Esophagus muscularis mucosa (tissue), 4 donors: ENCODE measurements at regions of chr9 and their contacts with region 1.

Region 1: DNA sequence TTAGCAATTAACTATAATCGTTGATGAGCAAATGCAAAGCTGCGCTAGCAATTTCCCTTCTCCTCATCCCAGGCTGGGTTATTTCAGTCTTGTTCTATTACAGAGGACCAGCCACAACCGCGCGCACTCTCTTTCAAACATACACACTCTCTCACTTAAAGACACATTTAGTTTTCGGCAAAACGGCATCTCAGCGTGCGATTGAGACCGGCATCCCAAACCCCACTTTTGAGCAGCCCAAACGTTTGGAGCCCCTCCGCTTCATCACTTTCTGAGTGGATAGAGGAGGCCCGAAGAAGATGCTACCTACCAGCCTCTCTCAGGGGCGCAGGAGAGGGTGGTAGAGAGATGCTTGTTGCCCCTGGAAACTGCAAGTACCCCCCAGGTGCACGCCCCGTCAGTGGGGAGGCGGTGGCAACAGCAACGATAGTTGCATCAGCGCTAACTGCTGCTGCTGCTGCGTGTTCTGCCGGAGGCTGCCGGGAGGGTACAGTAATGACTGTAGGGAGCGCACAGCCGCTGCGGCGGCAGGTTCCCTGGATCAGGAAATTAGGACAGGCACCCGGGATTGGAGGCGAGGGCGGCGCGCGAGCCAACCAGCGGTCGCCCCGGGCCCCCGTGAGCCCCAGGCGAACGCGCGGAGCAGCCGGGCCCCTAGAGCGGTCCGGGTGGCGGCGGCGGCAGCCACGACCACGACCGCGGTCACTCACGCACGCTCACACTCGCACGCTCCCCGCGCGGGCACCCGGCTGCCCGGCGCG is 488 bp upstream of the VLDLR start:
- DNase-seq: peak; percentile 93
- H3K4me3 ChIP-seq: peak overlapping the region; percentile 79 to 93 (median 86)
- H3K27ac ChIP-seq: peak overlapping the region; percentile 86 to 92 (median 89)
- H3K4me1 ChIP-seq: peaks cover 12 to 49% (median 34%) of the 10 kb centered on the region in 4 donors
- H3K27me3 ChIP-seq: peaks cover 0 to 20% (median 2%) of the 10 kb centered on the region in 4 donors
- CTCF ChIP-seq: peak in 2 of 3 experiments; percentile 25 to 36
- EP300 ChIP-seq: no peak
- POLR2A ChIP-seq: peak; percentile 21

Region 2: DNA sequence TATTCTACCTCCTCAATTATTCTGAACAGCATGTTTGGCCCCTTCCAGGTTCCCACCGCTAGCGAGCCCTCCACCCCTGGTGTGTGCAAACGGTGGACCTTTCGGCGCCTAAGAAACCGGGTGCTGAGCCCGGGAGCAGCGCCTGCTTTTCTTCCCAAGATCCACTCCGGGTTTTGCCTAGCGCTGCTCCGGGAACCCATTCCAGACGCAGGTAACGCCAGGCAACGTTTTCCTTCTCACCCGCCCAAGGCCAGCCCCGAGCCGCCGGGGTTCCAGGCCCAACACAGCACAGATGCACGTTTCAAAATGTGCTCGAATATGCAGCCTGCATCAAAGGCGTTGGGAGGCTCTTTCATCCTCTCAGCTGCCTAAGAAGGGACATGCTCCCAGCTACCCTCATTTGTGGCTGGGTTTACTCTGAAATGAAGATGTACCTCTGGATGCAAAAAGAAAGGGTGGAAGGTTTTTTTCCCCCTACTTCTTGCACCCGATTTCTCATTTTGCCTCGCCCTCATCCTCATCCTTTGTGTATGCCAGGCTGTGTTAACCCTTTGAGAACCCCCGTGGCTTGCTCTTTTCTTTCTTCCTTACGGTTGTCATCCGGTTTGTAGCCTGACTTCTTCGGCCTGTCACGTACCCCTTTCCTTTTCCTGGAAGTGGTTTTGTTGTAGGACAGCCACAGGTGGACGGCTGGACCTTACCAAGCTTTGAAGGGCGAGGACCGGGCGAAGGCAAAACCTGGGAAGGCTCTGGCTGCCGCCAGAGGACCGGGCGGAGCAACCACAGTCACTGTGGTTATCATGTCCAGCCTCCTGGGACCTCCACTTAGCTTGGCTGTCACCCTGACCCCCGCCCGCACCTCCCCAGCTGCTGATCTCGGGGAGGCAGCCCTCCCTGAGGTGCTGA is 379.0 kb before region 1 on chr9:
- intact Hi-C with region 1: loop called (anchors 10 kb)
- DNase-seq: no peak
- H3K4me3 ChIP-seq: peak overlapping the region; percentile 52 to 61 (median 58)
- H3K27ac ChIP-seq: peak overlapping the region; percentile 47 to 79 (median 66)
- H3K4me1 ChIP-seq: peaks cover 7 to 24% (median 20%) of the 10 kb centered on the region in 4 donors
- H3K27me3 ChIP-seq: no peaks in the 10 kb centered on the region
- CTCF ChIP-seq: peak in 2 of 3 experiments; percentile 2 to 9
- EP300 ChIP-seq: no peak
- POLR2A ChIP-seq: peak; percentile 79

Region 3: DNA sequence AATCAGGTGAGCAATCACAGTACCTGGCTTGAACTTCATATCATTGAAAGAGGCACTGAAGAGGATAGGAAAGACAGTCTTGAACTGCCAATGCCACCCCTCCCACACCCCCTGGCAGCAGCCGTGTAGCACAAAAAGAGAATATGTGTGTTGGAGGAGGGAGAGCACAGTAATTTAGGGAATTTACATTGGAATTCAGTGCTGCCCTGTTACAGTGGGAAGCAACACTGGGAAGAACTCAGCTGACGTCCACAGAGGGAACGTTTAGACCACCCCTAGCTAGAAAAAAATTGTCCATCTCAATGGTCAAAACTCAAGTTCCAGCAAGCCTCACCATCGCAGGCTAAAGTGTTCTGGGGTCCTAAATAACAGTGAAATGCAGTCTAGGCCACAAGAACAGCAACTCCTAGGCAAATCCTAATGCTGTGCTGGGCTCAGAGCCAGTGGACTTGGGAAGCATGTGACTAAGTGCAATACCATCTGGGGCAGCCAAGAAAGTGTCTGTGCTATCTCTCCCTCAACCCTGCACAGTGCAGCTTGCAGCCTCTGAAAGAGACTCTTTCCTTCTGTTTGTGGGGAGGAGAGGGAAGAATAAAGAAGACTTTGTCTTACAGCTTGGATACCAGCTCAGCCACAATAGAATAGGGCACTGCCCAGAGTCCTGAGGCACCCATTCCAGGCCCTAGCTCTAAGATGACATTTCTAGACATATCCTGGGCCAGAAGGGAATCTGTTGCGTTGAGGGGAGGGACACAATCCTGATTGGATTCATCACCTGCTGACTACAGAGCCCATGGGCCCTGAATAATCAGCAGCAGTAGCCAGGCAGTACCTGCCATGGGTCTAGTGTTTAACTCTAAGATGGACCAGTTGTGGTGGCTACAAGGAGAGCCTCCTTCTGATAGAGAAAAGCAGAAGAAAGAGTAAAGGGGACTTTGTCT is 61.6 kb before region 1 on chr9:
- intact Hi-C with region 1: loop called (anchors 5 kb)
- DNase-seq: no peak
- H3K4me3 ChIP-seq: no peak overlapping the region
- H3K27ac ChIP-seq: peak overlapping the region; percentile 69 to 74 (median 73)
- H3K4me1 ChIP-seq: peaks cover 18 to 26% (median 23%) of the 10 kb centered on the region in 4 donors
- H3K27me3 ChIP-seq: no peaks in the 10 kb centered on the region
- CTCF ChIP-seq: no peak
- EP300 ChIP-seq: no peak
- POLR2A ChIP-seq: no peak

Region 4: DNA sequence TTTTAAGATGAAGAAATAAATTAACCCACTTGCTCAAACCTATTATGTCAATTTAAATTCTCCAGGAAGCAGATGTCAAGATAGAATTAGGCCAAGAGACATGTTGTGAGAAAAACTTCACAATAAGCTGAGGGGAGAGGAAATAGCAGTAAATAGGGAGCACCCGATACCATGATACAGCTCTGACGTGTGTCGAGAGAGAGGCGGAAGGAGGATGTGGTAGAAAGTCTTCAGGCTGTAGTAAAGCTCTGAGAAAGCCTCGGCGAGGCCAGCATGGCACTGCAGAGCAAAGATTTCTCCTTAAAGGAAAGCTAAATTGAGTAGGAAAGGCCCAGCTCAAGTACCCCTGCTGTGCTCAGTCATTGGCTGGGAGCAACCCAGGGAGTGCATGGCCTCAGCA is 228.8 kb after region 1 on chr9:
- intact Hi-C with region 1: loop called (anchors 10 kb)
- DNase-seq: no peak
- H3K4me3 ChIP-seq: no peak overlapping the region
- H3K27ac ChIP-seq: no peak overlapping the region
- H3K4me1 ChIP-seq: peaks cover 7 to 14% (median 9%) of the 10 kb centered on the region in 4 donors
- H3K27me3 ChIP-seq: no peaks in the 10 kb centered on the region
- CTCF ChIP-seq: no peak
- EP300 ChIP-seq: no peak
- POLR2A ChIP-seq: no peak